Activated CD4-positive, alpha-beta T cell treated with anti-CD3 and anti-CD28 coated beads for 36 hours (primary cell): ENCODE measurements at regions of chr5 and their contacts with region 1.

Region 1: GRCh38 chr5:217860-218456 is at the starts of genes CCDC127 and SDHA:
- DNase-seq: peak; percentile 99
- ATAC-seq: peak; percentile 84
- H3K4me3 Mint-ChIP-seq: peak within 1 kb of the TSS; percentile 94
- H3K27ac Mint-ChIP-seq: peak within 1 kb of the TSS; percentile 89
- H3K4me1 Mint-ChIP-seq: peaks cover 60% of the 10 kb centered on the region
- H3K27me3 Mint-ChIP-seq: no peaks in the 10 kb centered on the region
- total RNA-seq, gene CCDC127: 6.0 to 7.0 TPM
- total RNA-seq, gene SDHA: 104 to 121 TPM

Region 2: GRCh38 chr5:188488-189481 is 29.2 kb before region 1 on chr5:
- CTCF ChIA-PET with region 1: interaction called, 12 read pairs
- POLR2A ChIA-PET with region 1: interaction called, 3 read pairs
- intact Hi-C with region 1: loop called (anchors 2 kb)
- DNase-seq: peak; percentile 95
- ATAC-seq: peak; percentile 96
- H3K4me3 Mint-ChIP-seq: no peak overlapping the region
- H3K27ac Mint-ChIP-seq: no peak overlapping the region
- H3K4me1 Mint-ChIP-seq: peaks cover 14% of the 10 kb centered on the region
- H3K27me3 Mint-ChIP-seq: peaks cover 3% of the 10 kb centered on the region

Region 3: GRCh38 chr5:234450-234849 is 16.5 kb after region 1 on chr5:
- CTCF ChIA-PET with region 1: no interaction called
- POLR2A ChIA-PET with region 1: no interaction called
- intact Hi-C with region 1: no loop called
- DNase-seq: no peak
- ATAC-seq: no peak
- H3K4me3 Mint-ChIP-seq: no peak overlapping the region
- H3K27ac Mint-ChIP-seq: no peak overlapping the region
- H3K4me1 Mint-ChIP-seq: peaks cover 5% of the 10 kb centered on the region
- H3K27me3 Mint-ChIP-seq: no peaks in the 10 kb centered on the region

Region 4: DNA sequence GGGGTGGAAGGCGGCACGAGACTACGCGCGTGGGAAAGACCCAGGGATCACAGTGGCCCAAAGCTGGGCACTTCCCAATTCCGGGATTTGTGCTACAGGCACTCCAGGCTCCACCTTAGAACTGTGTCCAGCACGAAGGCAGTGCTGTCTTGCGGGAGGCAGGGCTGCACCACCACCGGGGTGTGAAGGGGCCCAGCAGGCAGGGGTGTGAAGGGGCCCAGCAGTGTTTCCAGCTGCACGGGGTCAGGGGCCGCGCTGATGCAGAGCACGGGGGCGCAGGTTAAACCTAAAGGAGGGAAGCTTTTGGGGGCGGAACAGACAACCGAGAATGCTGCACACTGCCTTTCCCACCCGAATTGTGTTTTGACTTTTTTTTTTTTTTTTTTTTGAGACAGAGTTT is 52.4 kb after region 1 on chr5:
- CTCF ChIA-PET with region 1: interaction called, 3 read pairs
- POLR2A ChIA-PET with region 1: no interaction called
- intact Hi-C with region 1: loop called (anchors 1 to 2 kb)
- DNase-seq: no peak
- ATAC-seq: no peak
- H3K4me3 Mint-ChIP-seq: peak overlapping the region; percentile 95
- H3K27ac Mint-ChIP-seq: peak overlapping the region; percentile 47
- H3K4me1 Mint-ChIP-seq: peaks cover 41% of the 10 kb centered on the region
- H3K27me3 Mint-ChIP-seq: no peaks in the 10 kb centered on the region

Region 5: GRCh38 chr5:334903-335739 is 117.2 kb after region 1 on chr5:
- CTCF ChIA-PET with region 1: no interaction called
- POLR2A ChIA-PET with region 1: no interaction called
- intact Hi-C with region 1: loop called in 1 of 2 experiments (anchors 5 kb)
- DNase-seq: no peak
- ATAC-seq: no peak
- H3K4me3 Mint-ChIP-seq: peak overlapping the region; percentile 55
- H3K27ac Mint-ChIP-seq: peak overlapping the region; percentile 92
- H3K4me1 Mint-ChIP-seq: peaks cover 46% of the 10 kb centered on the region
- H3K27me3 Mint-ChIP-seq: peaks cover 4% of the 10 kb centered on the region

Region 6: DNA sequence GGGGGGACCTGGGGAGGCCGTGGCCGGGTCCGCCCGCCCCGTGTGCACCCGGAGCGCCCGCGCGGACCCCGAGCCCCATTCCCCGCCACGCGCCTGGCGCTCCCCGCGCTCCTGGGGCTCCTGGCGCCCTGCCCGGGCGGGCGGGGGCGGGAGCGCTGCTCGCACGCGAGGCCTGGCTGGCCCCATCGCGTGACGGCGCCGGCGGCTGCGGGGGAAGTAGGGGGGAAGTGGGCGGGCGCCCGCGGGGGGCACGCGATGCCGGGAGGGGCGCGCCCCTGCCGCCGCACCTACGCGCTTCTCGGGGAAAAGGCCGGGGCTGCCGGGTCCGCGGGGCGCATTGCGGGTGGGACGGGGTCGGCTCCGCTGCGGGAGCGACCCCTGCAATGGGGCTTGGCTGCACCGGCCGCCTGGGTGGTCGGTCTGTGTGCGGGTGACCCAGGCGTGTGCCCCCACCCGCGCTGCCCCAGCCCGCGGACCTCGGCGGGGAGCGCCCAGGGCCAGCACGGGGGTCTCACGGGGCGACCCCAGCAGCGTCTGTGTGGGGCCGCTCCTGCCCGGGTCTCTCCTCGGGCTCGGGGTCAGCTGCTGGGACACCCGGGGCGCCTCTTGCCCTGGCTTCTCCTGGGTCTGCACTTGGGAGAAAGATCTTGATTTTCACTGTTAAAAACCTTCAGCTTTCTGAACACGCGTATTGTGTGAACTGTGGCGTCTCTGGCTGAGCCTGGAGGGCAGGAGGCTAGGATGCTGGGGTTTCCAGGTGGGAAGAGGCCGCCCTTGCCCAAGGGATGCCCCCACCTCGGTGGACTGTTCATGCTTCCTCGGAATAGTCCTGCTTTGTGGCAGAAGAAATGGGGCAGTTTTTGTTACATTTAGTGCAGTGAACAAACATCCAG is 156.0 kb after region 1 on chr5:
- CTCF ChIA-PET with region 1: no interaction called
- POLR2A ChIA-PET with region 1: no interaction called
- intact Hi-C with region 1: loop called in 1 of 2 experiments (anchors 10 kb)
- DNase-seq: peak; percentile 88
- ATAC-seq: peak; percentile 37
- H3K4me3 Mint-ChIP-seq: peak overlapping the region; percentile 62
- H3K27ac Mint-ChIP-seq: peak overlapping the region; percentile 94
- H3K4me1 Mint-ChIP-seq: peaks cover 69% of the 10 kb centered on the region
- H3K27me3 Mint-ChIP-seq: no peaks in the 10 kb centered on the region

Region 7: GRCh38 chr5:415928-416635 is 198.1 kb after region 1 on chr5:
- CTCF ChIA-PET with region 1: no interaction called
- POLR2A ChIA-PET with region 1: no interaction called
- intact Hi-C with region 1: no loop called
- DNase-seq: peak; percentile 47
- ATAC-seq: peak; percentile 63
- H3K4me3 Mint-ChIP-seq: no peak overlapping the region
- H3K27ac Mint-ChIP-seq: no peak overlapping the region
- H3K4me1 Mint-ChIP-seq: peaks cover 15% of the 10 kb centered on the region
- H3K27me3 Mint-ChIP-seq: peaks cover under 1% of the 10 kb centered on the region

Region 8: DNA sequence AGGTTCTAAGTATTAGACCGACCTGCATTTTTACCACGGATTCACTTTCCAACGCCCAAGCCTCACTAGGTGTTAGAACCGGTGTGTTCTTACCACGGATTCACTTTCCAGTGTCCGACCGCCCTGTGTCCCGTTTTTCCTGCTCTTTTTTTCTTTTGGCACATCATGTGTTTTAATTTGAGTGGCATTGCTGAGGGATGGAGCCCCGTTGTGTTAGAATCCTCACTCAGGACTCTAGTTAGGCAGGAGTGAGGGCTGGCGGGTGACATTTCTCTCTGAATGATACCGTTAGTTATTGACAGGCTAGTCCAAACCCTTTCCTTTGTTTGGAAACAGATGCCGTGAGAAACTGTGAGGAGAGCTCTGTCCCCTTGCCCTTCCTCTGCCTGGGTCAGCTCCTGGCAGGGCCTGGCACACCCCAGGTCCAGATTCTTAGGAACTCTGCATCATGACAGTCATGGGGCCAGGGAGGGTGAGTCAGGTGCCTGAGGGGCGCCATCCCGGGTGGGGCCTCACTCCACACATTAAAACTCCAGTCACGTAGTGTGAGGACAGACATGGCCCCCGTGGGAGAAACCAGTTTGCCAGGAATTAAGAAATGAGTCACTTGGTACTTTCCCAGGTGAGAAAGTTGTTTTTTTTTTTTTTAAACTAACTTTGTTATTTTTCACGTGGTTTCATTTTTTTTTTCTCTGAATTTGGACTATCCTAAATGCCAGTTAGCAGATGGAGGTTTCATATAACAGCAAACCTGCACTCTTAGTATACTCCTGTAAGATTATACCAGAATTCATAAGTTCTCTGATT is 240.8 kb after region 1 on chr5:
- CTCF ChIA-PET with region 1: no interaction called
- POLR2A ChIA-PET with region 1: no interaction called
- intact Hi-C with region 1: loop called in 1 of 2 experiments (anchors 5 kb)
- DNase-seq: peak; percentile 84
- ATAC-seq: peak; percentile 92
- H3K4me3 Mint-ChIP-seq: peak overlapping the region; percentile 40
- H3K27ac Mint-ChIP-seq: peak overlapping the region; percentile 97
- H3K4me1 Mint-ChIP-seq: peaks cover 72% of the 10 kb centered on the region
- H3K27me3 Mint-ChIP-seq: no peaks in the 10 kb centered on the region

Region 9: GRCh38 chr5:1799602-1800471 is 1581.9 kb after region 1 on chr5 and contains the start of gene MRPL36:
- CTCF ChIA-PET with region 1: no interaction called
- POLR2A ChIA-PET with region 1: no interaction called
- intact Hi-C with region 1: loop called in 1 of 2 experiments (anchors 5 kb)
- DNase-seq: peak; percentile 97
- ATAC-seq: peak; percentile 79
- H3K4me3 Mint-ChIP-seq: peak within 1 kb of the TSS; percentile 94
- H3K27ac Mint-ChIP-seq: peak within 1 kb of the TSS; percentile 97
- H3K4me1 Mint-ChIP-seq: peaks cover 54% of the 10 kb centered on the region
- H3K27me3 Mint-ChIP-seq: no peaks in the 10 kb centered on the region
- total RNA-seq, gene MRPL36: 51.4 to 64.9 TPM